Calu3 (cell line): ENCODE measurements at regions of chr1 and their contacts with region 1.

Region 1: GRCh38 chr1:156193488-156194299 is at the start of gene SLC25A44:
- DNase-seq: peak; percentile 98
- H3K4me3 Mint-ChIP-seq: peak within 1 kb of the TSS; percentile 95
- H3K27ac Mint-ChIP-seq: peak within 1 kb of the TSS; percentile 85
- H3K4me1 Mint-ChIP-seq: peaks cover 30% of the 10 kb centered on the region
- H3K27me3 Mint-ChIP-seq: peaks cover 7% of the 10 kb centered on the region
- CTCF ChIP-seq: peak; percentile 52
- total RNA-seq, gene SLC25A44: 28.2 and 32.5 TPM in 2 replicates

Region 2: GRCh38 chr1:156146020-156146768 is 47.5 kb before region 1 on chr1:
- CTCF ChIA-PET with region 1: interaction called, 14 read pairs
- intact Hi-C with region 1: no loop called
- DNase-seq: peak; percentile 86
- H3K4me3 Mint-ChIP-seq: peak overlapping the region; percentile 4
- H3K27ac Mint-ChIP-seq: peak overlapping the region; percentile 72
- H3K4me1 Mint-ChIP-seq: peaks cover 21% of the 10 kb centered on the region
- H3K27me3 Mint-ChIP-seq: peaks cover 37% of the 10 kb centered on the region
- CTCF ChIP-seq: peak; percentile 68

Region 3: GRCh38 chr1:156212833-156213643 is 19.3 kb after region 1 on chr1 and contains the start of gene PMF1:
- CTCF ChIA-PET with region 1: interaction called, 15 read pairs
- intact Hi-C with region 1: no loop called
- DNase-seq: peak; percentile 98
- H3K4me3 Mint-ChIP-seq: peak within 1 kb of the TSS; percentile 90
- H3K27ac Mint-ChIP-seq: peak within 1 kb of the TSS; percentile 93
- H3K4me1 Mint-ChIP-seq: peaks cover 26% of the 10 kb centered on the region
- H3K27me3 Mint-ChIP-seq: no peaks in the 10 kb centered on the region
- CTCF ChIP-seq: no peak
- total RNA-seq, gene PMF1: 57.3 and 59.0 TPM in 2 replicates

Region 4: GRCh38 chr1:156310962-156311361 is 117.3 kb after region 1 on chr1:
- CTCF ChIA-PET with region 1: no interaction called
- intact Hi-C with region 1: no loop called
- DNase-seq: no peak
- H3K4me3 Mint-ChIP-seq: no peak overlapping the region
- H3K27ac Mint-ChIP-seq: no peak overlapping the region
- H3K4me1 Mint-ChIP-seq: no peaks in the 10 kb centered on the region
- H3K27me3 Mint-ChIP-seq: no peaks in the 10 kb centered on the region
- CTCF ChIP-seq: no peak

Region 5: GRCh38 chr1:156385534-156386031 is 191.9 kb after region 1 on chr1:
- CTCF ChIA-PET with region 1: no interaction called
- intact Hi-C with region 1: no loop called
- DNase-seq: peak; percentile 67
- H3K4me3 Mint-ChIP-seq: no peak overlapping the region
- H3K27ac Mint-ChIP-seq: no peak overlapping the region
- H3K4me1 Mint-ChIP-seq: no peaks in the 10 kb centered on the region
- H3K27me3 Mint-ChIP-seq: peaks cover 59% of the 10 kb centered on the region
- CTCF ChIP-seq: peak; percentile 100